ENCODE measurements at regions of chr1 and their contacts with region 1.

Region 1: GRCh38 chr1:37859507-37860345 is at the start of gene MTF1:
- DNase-seq: peak; percentile 99
- H3K4me3 ChIP-seq: peak within 1 kb of the TSS; percentile 89 to 97 (median 95)
- H3K27ac ChIP-seq: peak within 1 kb of the TSS; percentile 88 to 95 (median 93)
- H3K4me1 ChIP-seq: peaks cover 43 to 54% (median 46%) of the 10 kb centered on the region in 4 donors
- H3K27me3 ChIP-seq: no peaks in the 10 kb centered on the region
- CTCF ChIP-seq: peak; percentile 81 to 92 (median 87)
- EP300 ChIP-seq: no peak
- POLR2A ChIP-seq: peak; percentile 25
- total RNA-seq, gene MTF1: 4.0 to 7.4 (median 6.7) TPM

Region 2: GRCh38 chr1:37692078-37692833 is 167.5 kb before region 1 on chr1 and contains the start of gene CDCA8:
- intact Hi-C with region 1: loop called (anchors 5 kb)
- DNase-seq: peak; percentile 99
- H3K4me3 ChIP-seq: peak within 1 kb of the TSS; percentile 75 to 89 (median 80)
- H3K27ac ChIP-seq: peak within 1 kb of the TSS; percentile 88 to 91 (median 90)
- H3K4me1 ChIP-seq: peaks cover 29 to 45% (median 39%) of the 10 kb centered on the region in 4 donors
- H3K27me3 ChIP-seq: no peaks in the 10 kb centered on the region
- CTCF ChIP-seq: peak; percentile 50 to 67 (median 61)
- EP300 ChIP-seq: no peak
- POLR2A ChIP-seq: no peak
- total RNA-seq, gene CDCA8: 0.26 to 0.42 (median 0.40) TPM in 3 of 4 donors, not detected in the other

Region 3: DNA sequence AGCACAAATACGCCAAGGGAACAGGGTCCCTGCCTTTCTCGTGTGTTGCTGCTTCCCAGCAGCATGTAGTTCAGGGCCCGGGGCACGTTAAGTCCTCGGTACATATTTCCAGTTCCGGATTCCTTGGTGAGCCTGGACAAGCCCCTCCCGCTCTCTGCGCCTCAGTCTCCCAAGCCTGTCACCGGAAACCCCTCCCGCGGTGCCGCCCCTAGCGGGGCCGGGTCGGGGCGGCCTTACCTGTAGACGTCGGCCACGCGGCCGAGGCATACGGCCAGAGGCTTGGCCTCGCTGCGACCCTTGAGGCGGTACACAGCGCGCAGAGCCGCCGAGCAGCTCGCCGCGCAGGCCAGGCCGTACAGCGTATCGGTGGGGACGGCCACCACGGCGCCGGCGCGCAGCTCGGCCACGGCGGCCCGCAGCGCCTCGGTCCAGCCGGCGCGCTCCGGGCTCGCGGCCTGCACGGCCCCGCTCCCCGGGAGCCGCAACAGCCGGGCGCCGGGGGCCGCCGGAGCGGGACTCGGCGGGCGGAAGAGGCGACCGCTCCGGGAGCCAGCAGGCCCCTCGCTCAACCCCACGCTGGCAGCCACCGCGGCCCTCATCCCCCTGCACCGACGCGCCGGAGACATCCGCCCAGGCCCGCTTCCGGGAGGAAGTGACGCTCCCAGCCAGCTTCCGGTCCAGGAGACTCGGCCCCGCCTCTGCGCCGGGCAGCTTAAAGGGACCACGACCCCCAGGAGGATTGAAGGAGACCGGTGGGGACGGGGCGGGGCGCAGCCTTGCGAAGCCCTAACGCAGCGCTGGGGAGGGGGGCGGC is 52.0 kb before region 1 on chr1 and contains the starts of genes C1orf122 and YRDC:
- intact Hi-C with region 1: loop called (anchors 2 kb)
- DNase-seq: peak; percentile 98
- H3K4me3 ChIP-seq: peak within 1 kb of the TSS; percentile 75 to 96 (median 83)
- H3K27ac ChIP-seq: peak within 1 kb of the TSS; percentile 93 to 98 (median 96)
- H3K4me1 ChIP-seq: peaks cover 19 to 58% (median 46%) of the 10 kb centered on the region in 4 donors
- H3K27me3 ChIP-seq: no peaks in the 10 kb centered on the region
- CTCF ChIP-seq: no peak
- EP300 ChIP-seq: no peak
- POLR2A ChIP-seq: peak; percentile 84
- total RNA-seq, gene C1orf122: 69.9 to 103 (median 94.3) TPM
- total RNA-seq, gene YRDC: 10.8 to 19.1 (median 14.3) TPM

Region 4: DNA sequence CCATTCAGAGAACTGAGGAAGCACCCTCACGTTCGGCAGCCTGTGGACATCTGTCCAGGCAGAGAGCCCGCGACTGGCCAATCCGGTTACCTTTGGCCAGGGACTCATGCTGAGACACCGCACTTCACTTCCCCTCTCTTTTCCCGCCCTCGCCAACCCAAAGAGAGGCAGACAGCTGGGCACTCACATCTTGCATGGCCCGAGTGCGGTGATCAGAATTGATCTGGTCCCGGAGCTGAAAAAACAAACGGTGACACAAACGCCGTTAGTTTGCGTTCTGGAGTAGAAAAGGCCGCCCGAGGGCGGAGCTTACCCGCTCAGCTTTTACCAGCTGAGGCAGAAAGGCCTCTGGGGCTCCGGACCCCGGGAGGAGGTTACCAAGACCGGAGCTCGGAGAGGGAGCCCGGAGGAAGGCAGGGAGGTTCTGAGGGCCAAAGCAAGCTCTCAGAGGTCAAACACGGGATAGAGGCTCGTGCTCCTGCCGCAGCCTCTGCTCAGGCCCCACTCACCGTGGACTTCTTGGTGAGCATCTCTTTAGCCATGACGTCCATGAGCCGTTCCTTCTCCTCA is 129.7 kb after region 1 on chr1:
- intact Hi-C with region 1: loop called (anchors 10 kb)
- DNase-seq: no peak
- H3K4me3 ChIP-seq: peak overlapping the region; percentile 68 to 95 (median 82)
- H3K27ac ChIP-seq: peak overlapping the region; percentile 76 to 87 (median 83)
- H3K4me1 ChIP-seq: peaks cover 20 to 33% (median 24%) of the 10 kb centered on the region in 4 donors
- H3K27me3 ChIP-seq: no peaks in the 10 kb centered on the region
- CTCF ChIP-seq: no peak
- EP300 ChIP-seq: no peak
- POLR2A ChIP-seq: no peak